CD14-positive monocyte (primary cell): ENCODE measurements at regions of chr5 and their contacts with region 1.

Region 1: DNA sequence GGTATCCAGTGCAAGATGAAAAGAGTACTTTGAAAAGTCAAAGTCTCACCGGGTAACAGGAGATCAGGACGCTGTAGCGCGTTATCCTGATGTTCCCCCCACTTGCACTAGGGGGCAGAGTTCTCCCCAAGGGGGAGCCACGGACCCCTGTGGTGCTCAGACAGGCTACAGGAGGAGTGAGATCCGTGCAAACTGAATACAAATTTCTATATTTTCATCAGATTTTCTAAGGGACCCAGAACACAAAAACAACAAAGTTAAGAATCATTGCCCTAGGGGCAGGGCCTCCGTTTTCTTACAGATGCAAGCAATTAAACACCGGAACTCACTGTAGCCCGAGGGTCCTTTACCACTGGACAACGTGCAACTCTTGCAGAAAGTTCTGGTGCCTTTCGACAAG is 2.0 kb downstream of the MYO10 start:
- DNase-seq: peak; percentile 12 to 38 (median 34)
- H3K4me3 ChIP-seq: no peak overlapping the region
- H3K4me3 Mint-ChIP-seq: peak overlapping the region; percentile 59 to 85
- H3K27ac ChIP-seq: no peak overlapping the region
- H3K27ac Mint-ChIP-seq: no peak overlapping the region
- H3K4me1 ChIP-seq: peaks cover 30 to 33% of the 10 kb centered on the region in 2 donors
- H3K4me1 Mint-ChIP-seq: peaks cover 38% of the 10 kb centered on the region
- H3K27me3 ChIP-seq: peaks cover 45 to 57% of the 10 kb centered on the region in 2 donors
- H3K27me3 Mint-ChIP-seq: peaks cover 58 to 76% (median 62%) of the 10 kb centered on the region in 3 donors
- CTCF ChIP-seq: peak; percentile 96

Region 2: DNA sequence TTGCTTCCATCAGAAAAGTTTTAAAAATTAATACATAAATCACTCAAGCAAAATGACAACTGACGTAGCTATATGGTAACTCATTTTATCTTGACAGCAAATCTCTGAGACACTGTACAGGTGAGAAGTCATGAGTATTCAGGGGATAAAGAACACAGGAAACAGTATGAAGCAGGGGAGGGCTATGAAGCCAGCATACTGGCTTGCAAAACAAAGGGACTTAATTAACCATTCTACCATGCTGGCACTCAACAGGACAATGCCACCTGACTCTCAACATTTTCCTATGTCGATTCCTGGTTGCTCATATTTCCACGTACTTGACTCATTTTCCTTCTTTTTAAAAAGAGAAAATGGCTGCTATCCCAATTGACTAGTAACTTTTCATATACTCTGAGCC is 165.9 kb before region 1 on chr5:
- intact Hi-C with region 1: no loop called
- DNase-seq: no peak
- H3K4me3 ChIP-seq: no peak overlapping the region
- H3K4me3 Mint-ChIP-seq: no peak overlapping the region
- H3K27ac ChIP-seq: no peak overlapping the region
- H3K27ac Mint-ChIP-seq: no peak overlapping the region
- H3K4me1 ChIP-seq: no peaks in the 10 kb centered on the region
- H3K4me1 Mint-ChIP-seq: no peaks in the 10 kb centered on the region
- H3K27me3 ChIP-seq: no peaks in the 10 kb centered on the region
- H3K27me3 Mint-ChIP-seq: no peaks in the 10 kb centered on the region
- CTCF ChIP-seq: no peak

Region 3: GRCh38 chr5:16791036-16791705 is 143.0 kb before region 1 on chr5:
- intact Hi-C with region 1: loop called in 1 of 2 experiments (anchors 10 kb)
- DNase-seq: peak; percentile 17 to 55 (median 35)
- H3K4me3 ChIP-seq: no peak overlapping the region
- H3K4me3 Mint-ChIP-seq: peak overlapping the region in 1 of 2 donors; percentile 60
- H3K27ac ChIP-seq: no peak overlapping the region
- H3K27ac Mint-ChIP-seq: no peak overlapping the region
- H3K4me1 ChIP-seq: no peaks in the 10 kb centered on the region
- H3K4me1 Mint-ChIP-seq: peaks cover 8% of the 10 kb centered on the region
- H3K27me3 ChIP-seq: no peaks in the 10 kb centered on the region
- H3K27me3 Mint-ChIP-seq: peaks cover 2 to 4% (median 3%) of the 10 kb centered on the region in 3 donors
- CTCF ChIP-seq: peak; percentile 77

Region 4: DNA sequence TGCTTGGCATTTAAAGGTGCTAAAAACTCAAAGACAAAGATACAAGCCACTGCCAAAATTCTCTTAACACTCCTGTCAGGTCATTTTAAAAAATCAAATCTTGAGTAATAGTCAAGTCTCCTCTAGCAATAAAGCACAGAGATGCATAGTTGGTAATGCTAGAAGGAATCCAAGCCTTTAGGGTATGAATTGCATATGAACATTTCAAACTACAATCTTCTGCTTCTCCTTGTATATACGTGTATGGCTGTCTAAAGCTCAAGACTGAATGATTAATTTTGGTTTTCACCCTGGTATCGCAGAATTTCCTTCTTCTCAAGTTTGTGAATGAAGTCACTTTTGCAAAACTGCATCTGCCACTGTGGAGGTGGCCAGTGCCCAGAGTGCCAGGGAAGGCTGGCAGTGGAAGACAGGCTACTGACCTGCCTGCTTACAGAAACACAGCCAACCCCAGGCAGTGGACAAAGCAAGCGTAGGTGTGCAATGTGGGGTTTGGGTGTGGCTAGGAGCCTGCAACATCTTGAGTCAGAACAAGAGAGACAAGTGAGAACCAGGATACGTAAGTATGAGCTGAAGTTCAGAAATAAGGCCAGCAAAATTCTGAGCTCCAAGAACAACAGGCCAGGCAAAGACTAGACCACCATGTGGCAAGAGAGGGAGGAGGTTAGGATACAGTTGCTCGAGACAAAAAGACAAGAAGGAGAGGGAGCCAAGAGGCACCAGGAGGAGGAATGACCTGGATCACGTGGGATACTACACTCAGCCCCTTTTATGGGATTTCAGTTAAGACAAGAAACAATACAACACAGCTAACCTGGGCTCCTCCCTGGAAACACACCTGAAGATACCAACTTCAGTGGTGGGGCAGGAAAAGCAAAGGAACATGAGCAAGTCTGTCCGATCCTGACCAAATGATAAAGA is 20.7 kb before region 1 on chr5:
- intact Hi-C with region 1: no loop called
- DNase-seq: no peak
- H3K4me3 ChIP-seq: no peak overlapping the region
- H3K4me3 Mint-ChIP-seq: no peak overlapping the region
- H3K27ac ChIP-seq: no peak overlapping the region
- H3K27ac Mint-ChIP-seq: peak overlapping the region in 1 of 7 donors; percentile 24
- H3K4me1 ChIP-seq: no peaks in the 10 kb centered on the region
- H3K4me1 Mint-ChIP-seq: no peaks in the 10 kb centered on the region
- H3K27me3 ChIP-seq: no peaks in the 10 kb centered on the region
- H3K27me3 Mint-ChIP-seq: peaks cover 0 to 3% (median 2%) of the 10 kb centered on the region in 3 donors
- CTCF ChIP-seq: no peak

Region 5: GRCh38 chr5:16983022-16983639 is 49.0 kb after region 1 on chr5:
- intact Hi-C with region 1: no loop called
- DNase-seq: no peak
- H3K4me3 ChIP-seq: no peak overlapping the region
- H3K4me3 Mint-ChIP-seq: no peak overlapping the region
- H3K27ac ChIP-seq: no peak overlapping the region
- H3K27ac Mint-ChIP-seq: no peak overlapping the region
- H3K4me1 ChIP-seq: no peaks in the 10 kb centered on the region
- H3K4me1 Mint-ChIP-seq: no peaks in the 10 kb centered on the region
- H3K27me3 ChIP-seq: peaks cover 0 to 3% of the 10 kb centered on the region in 2 donors
- H3K27me3 Mint-ChIP-seq: peaks cover 16 to 22% (median 18%) of the 10 kb centered on the region in 3 donors
- CTCF ChIP-seq: no peak

Region 6: GRCh38 chr5:17132444-17133083 is 198.4 kb after region 1 on chr5:
- intact Hi-C with region 1: loop called in 1 of 2 experiments (anchors 10 kb)
- DNase-seq: peak; percentile 20 to 63 (median 30)
- H3K4me3 ChIP-seq: no peak overlapping the region
- H3K4me3 Mint-ChIP-seq: no peak overlapping the region
- H3K27ac ChIP-seq: no peak overlapping the region
- H3K27ac Mint-ChIP-seq: no peak overlapping the region
- H3K4me1 ChIP-seq: peaks cover 8 to 11% of the 10 kb centered on the region in 2 donors
- H3K4me1 Mint-ChIP-seq: peaks cover 23% of the 10 kb centered on the region
- H3K27me3 ChIP-seq: peaks cover 17% of the 10 kb centered on the region in 2 donors
- H3K27me3 Mint-ChIP-seq: peaks cover 24 to 29% (median 27%) of the 10 kb centered on the region in 3 donors
- CTCF ChIP-seq: peak; percentile 87

Region 7: DNA sequence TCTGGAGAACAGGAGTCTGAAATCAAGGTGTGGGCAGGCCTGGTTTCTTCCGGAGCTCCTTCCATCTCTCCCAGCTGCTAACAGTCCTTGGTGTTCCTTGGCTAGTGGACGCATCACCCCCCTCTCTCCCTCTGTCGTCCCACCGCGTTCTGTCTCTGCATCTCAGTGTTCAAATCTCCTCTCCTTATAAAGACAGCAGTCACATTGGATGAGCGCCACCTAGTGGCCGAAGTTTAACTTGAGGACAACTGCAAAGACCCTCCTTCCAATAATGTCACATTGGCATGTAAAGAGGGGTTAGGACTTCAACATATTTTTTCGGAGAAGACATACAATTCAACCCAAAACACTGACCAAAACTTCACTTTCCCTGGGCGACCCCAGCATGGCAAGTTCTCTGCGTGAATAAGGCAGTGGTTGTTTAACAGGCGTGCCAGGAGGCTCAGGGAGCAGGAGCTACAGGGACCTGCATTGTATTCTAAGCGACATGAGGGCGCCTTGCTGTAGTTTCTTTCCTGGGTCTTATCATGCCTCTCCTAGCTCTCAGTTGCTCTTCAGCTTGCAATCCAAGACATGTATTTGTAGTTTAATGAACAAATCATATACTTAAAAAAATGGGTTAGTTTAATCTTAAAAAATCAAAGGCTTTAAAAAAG is 255.4 kb after region 1 on chr5:
- intact Hi-C with region 1: loop called in 1 of 2 experiments (anchors 5 kb)
- DNase-seq: peak; percentile 47 to 70 (median 68)
- H3K4me3 ChIP-seq: no peak overlapping the region
- H3K4me3 Mint-ChIP-seq: no peak overlapping the region
- H3K27ac ChIP-seq: no peak overlapping the region
- H3K27ac Mint-ChIP-seq: no peak overlapping the region
- H3K4me1 ChIP-seq: no peaks in the 10 kb centered on the region
- H3K4me1 Mint-ChIP-seq: peaks cover 14% of the 10 kb centered on the region
- H3K27me3 ChIP-seq: no peaks in the 10 kb centered on the region
- H3K27me3 Mint-ChIP-seq: peaks cover 0 to 3% (median 2%) of the 10 kb centered on the region in 3 donors
- CTCF ChIP-seq: peak; percentile 92